ENCODE measurements at regions of chr4 and their contacts with region 1.

Region 1: GRCh38 chr4:76179398-76180318 is 31.5 kb upstream of the NUP54 start:
- H3K4me3 Mint-ChIP-seq: no peak overlapping the region
- H3K27ac Mint-ChIP-seq: no peak overlapping the region
- H3K4me1 Mint-ChIP-seq: no peaks in the 10 kb centered on the region
- H3K27me3 Mint-ChIP-seq: no peaks in the 10 kb centered on the region

Region 2: DNA sequence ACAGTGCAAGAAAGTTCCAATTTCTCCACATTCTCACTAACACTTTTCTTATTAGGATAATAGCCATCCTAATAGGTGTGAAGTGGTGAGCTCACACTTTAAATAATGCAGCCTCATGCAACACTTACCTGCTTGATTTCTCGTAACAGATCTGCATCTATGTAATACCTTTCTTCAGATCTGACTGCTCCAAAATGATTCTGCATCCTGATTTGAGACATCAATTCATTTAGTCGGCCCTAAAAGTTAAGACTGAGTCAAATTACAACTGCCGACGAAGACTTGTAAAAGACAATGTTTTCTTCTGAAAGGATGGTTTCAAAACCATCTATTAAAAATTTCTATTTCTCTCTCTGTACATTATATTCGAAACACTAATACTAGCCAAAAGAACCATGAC is 62.1 kb before region 1 on chr4:
- intact Hi-C with region 1: no loop called
- H3K4me3 Mint-ChIP-seq: no peak overlapping the region
- H3K27ac Mint-ChIP-seq: no peak overlapping the region
- H3K4me1 Mint-ChIP-seq: no peaks in the 10 kb centered on the region
- H3K27me3 Mint-ChIP-seq: no peaks in the 10 kb centered on the region

Region 3: GRCh38 chr4:76156635-76157034 is 23.0 kb before region 1 on chr4:
- intact Hi-C with region 1: no loop called
- H3K4me3 Mint-ChIP-seq: no peak overlapping the region
- H3K27ac Mint-ChIP-seq: no peak overlapping the region
- H3K4me1 Mint-ChIP-seq: peaks cover 9% of the 10 kb centered on the region
- H3K27me3 Mint-ChIP-seq: no peaks in the 10 kb centered on the region

Region 4: GRCh38 chr4:76377911-76378310 is 198.3 kb after region 1 on chr4:
- intact Hi-C with region 1: loop called (anchors 1 kb)
- H3K4me3 Mint-ChIP-seq: no peak overlapping the region
- H3K27ac Mint-ChIP-seq: no peak overlapping the region
- H3K4me1 Mint-ChIP-seq: no peaks in the 10 kb centered on the region
- H3K27me3 Mint-ChIP-seq: no peaks in the 10 kb centered on the region

Region 5: GRCh38 chr4:76504613-76505465 is 325.2 kb after region 1 on chr4:
- intact Hi-C with region 1: loop called (anchors 2 kb)
- H3K4me3 Mint-ChIP-seq: no peak overlapping the region
- H3K27ac Mint-ChIP-seq: no peak overlapping the region
- H3K4me1 Mint-ChIP-seq: no peaks in the 10 kb centered on the region
- H3K27me3 Mint-ChIP-seq: peaks cover 3% of the 10 kb centered on the region

Region 6: DNA sequence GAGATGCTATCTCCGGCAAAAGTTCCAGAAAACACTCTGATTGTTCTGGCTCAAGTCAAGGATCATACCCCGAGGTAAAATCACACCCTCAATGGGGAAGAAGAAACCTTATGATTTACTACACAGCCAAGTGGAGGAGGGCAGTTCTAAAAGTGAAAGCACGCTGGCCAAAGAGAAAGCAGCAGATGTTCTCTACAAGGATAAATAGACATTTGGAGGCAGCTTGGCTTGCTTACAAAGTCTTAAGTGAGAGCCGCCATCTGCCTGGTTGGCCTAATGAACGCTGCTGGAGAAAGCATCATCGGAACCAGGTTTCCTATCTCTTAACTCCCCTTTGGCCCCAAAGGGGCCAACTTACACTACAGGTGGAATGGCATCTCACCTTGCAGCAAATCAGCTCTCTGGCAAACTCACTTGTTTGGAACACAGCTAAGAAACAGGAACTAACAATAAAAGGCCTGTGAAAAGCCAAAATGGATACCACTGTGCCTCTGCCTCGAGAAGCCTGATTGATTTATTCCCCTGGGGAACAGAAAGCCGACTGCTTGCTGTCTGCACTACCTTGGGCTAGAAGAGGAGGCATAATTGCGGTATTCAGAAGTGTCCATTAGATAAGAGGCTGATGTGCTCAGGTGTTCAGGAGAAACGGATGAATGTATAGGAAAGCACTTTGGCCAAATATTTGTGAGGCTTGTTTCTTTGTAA is 1900.2 kb after region 1 on chr4:
- intact Hi-C with region 1: no loop called
- H3K4me3 Mint-ChIP-seq: no peak overlapping the region
- H3K27ac Mint-ChIP-seq: no peak overlapping the region
- H3K4me1 Mint-ChIP-seq: no peaks in the 10 kb centered on the region
- H3K27me3 Mint-ChIP-seq: peaks cover 2% of the 10 kb centered on the region

Measured in dendritic cell treated with granulocyte-macrophage colony-stimulating factor and Interleukin-4, amounts not matched to agents 40 ng/mL and 50 ng/mL, for 4 days (primary cell).